Posterior vena cava (tissue), 2 donors: ENCODE measurements at regions of chr11 and their contacts with region 1.

Region 1: GRCh38 chr11:118245936-118246562 is 6.1 kb downstream of the MPZL3 start:
- DNase-seq: no peak

Region 2: GRCh38 chr11:118263695-118264567 is 17.9 kb after region 1 on chr11 and contains the start of gene MPZL2:
- intact Hi-C with region 1: loop called in 1 of 2 experiments (anchors 1 kb)
- DNase-seq: no peak
- total RNA-seq, gene MPZL2: 29.8 to 53.3 TPM

Region 3: DNA sequence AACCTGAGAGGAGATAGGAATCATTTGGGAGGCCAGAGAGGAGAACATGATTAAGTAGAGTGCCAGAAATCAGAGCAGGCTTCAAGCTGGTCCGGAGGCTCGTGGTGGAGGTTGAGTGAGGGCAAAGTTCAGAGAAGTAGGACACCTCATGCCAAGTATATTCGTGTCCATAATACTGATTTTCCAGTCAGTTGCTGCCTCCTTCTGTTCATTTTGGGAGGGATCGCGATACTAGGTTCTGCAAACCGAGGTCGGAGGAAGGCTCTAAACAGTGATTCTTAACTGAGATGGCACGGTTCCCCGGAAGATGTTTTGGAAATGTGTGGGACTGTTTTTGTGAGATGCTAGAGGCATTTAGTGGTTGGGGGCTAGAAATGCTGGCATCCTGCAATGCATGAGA is 44.9 kb after region 1 on chr11:
- intact Hi-C with region 1: no loop called
- DNase-seq: no peak